ENCODE measurements at regions of chr9 and their contacts with region 1.

Region 1: DNA sequence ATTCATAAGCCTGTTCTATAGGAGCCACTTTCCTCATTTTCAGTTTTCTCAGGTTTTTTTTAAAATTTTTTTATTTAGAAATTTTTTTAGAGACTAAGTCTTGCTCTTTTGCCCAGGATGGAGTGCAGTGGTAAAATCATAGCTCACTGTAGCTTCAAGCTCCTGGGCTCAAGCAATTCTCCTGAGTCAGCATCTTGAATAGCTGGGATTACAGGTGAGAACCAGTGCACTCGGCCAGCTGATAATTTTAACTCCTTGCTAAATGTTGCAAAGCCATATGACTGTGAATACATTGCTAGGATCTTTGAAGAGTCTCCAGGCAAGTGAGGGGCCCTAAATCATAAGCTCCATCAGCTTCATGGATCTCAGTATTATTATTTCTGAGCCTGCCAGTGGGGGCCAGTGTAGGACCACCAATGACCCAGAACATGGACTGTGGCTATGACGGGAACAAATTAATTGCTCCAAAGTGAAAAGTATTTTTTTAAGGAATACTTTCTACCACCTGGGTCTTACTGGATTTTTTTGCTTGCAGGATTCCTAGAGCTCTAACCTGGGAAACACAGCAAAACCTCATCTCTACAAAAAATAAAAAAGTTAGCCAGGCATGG is 5.7 kb upstream of the GAPVD1 start:
- DNase-seq: no peak
- ATAC-seq: no peak
- H3K4me3 Mint-ChIP-seq: no peak overlapping the region
- H3K27ac Mint-ChIP-seq: no peak overlapping the region
- H3K4me1 Mint-ChIP-seq: peaks cover 9% of the 10 kb centered on the region
- H3K27me3 Mint-ChIP-seq: peaks cover 2% of the 10 kb centered on the region
- CTCF ChIP-seq: no peak

Region 2: DNA sequence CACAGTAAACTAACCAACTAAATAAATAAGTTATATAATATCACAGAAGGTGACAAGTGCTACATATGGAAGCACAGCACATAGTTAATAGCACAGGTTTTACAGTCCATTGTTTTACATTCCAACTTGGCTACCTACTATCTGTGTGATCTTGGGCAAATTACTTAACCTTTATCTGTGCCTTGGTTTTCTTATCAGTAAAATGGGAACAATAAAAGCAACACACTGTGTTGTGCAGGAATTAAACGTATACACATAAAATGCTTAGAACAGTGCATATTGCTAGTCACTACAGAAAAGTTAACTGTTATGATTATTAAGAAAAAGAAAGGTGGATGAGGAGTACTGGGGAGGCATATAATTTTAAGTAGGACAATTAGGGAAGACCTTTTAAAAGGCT is 272.2 kb before region 1 on chr9:
- CTCF ChIA-PET with region 1: no interaction called
- POLR2A ChIA-PET with region 1: no interaction called
- intact Hi-C with region 1: no loop called
- DNase-seq: no peak
- ATAC-seq: no peak
- H3K4me3 Mint-ChIP-seq: no peak overlapping the region
- H3K27ac Mint-ChIP-seq: no peak overlapping the region
- H3K4me1 Mint-ChIP-seq: no peaks in the 10 kb centered on the region
- H3K27me3 Mint-ChIP-seq: no peaks in the 10 kb centered on the region
- CTCF ChIP-seq: no peak

Region 3: DNA sequence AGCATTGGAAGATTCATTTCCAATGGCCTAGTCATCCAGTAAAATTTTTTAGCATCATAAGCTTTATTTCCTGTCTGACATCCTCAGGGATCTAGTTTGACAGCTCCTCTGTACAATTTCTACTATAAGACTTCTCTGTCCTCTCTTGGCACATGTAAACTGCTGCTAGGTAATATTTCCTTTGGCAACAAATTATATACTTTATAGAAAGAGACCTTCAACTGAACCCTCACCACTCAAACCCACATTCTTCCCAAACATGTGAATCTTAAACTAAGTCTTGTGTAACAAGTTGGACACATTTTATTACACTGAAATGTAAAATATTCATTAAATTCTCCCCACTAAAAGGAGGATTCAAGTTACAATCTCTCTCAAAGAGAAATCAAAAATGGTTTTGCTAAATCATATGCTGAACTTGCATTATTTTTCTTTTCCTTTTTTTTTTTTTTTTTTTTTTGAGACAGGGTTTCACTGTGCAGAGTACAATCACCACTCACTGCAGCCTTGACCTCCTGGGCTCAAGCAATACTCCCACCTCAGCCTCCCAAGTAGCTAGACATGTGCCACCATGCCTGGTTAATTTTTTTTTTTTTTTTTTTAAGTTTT is 149.5 kb before region 1 on chr9:
- CTCF ChIA-PET with region 1: no interaction called
- POLR2A ChIA-PET with region 1: no interaction called
- intact Hi-C with region 1: no loop called
- DNase-seq: no peak
- ATAC-seq: no peak
- H3K4me3 Mint-ChIP-seq: no peak overlapping the region
- H3K27ac Mint-ChIP-seq: no peak overlapping the region
- H3K4me1 Mint-ChIP-seq: peaks cover 5% of the 10 kb centered on the region
- H3K27me3 Mint-ChIP-seq: no peaks in the 10 kb centered on the region
- CTCF ChIP-seq: no peak

Region 4: GRCh38 chr9:125227761-125228160 is 28.1 kb before region 1 on chr9:
- CTCF ChIA-PET with region 1: no interaction called
- POLR2A ChIA-PET with region 1: interaction called, 5 read pairs
- intact Hi-C with region 1: loop called (anchors 1 kb)
- DNase-seq: no peak
- ATAC-seq: no peak
- H3K4me3 Mint-ChIP-seq: no peak overlapping the region
- H3K27ac Mint-ChIP-seq: no peak overlapping the region
- H3K4me1 Mint-ChIP-seq: no peaks in the 10 kb centered on the region
- H3K27me3 Mint-ChIP-seq: no peaks in the 10 kb centered on the region
- CTCF ChIP-seq: no peak

Measured in activated B cell treated with CpG ODN at 0.5 μM for 24 hours (primary cell).